ENCODE measurements at regions of chr3 and their contacts with region 1.

Region 1: DNA sequence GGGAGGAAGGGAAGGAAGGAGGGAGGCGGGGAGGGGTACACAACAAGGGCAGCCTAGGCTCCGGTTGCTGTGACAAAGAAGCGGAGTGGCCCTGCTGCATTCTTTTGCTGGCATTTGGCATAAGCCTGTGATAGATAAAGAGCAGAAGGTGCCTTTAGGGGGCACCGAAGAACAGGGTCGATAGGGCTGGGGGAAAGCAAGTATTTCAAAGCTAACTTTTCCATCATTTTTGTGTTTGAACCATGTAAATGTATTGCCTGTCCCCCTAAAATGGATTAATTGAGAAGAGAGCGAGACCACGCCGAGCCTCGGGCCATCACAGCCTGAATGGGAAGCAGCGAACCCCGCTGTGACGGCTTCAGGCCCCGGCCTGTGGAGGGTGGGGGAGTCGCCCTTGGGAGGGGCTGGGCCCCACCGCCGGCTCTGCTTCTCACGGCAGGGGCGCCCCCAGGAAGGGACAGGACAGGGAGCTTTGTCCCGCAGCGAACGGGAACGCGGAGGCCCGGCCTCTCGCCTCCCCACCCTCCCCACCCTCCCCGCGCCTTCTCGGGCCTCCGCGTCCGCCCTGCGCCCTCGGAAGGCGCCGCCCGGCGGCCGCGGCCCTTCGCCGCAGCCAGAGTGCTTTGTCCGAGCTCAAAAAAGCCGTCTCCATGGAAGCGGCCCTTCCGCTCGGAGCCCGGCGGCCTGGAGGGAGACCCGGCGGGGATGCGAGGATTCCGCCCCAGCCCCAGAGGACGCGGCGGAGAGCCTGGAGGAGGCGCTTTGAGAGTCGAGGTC is 32.4 kb upstream of the ALDH1L1 start:
- DNase-seq: peak; percentile 63 to 86
- ATAC-seq: peak; percentile 79
- H3K4me3 ChIP-seq: peak overlapping the region; percentile 1 to 8
- H3K27ac ChIP-seq: peak overlapping the region; percentile 53 to 64
- H3K4me1 ChIP-seq: peaks cover 0 to 2% of the 10 kb centered on the region in 2 donors
- H3K27me3 ChIP-seq: no peaks in the 10 kb centered on the region

Region 2: DNA sequence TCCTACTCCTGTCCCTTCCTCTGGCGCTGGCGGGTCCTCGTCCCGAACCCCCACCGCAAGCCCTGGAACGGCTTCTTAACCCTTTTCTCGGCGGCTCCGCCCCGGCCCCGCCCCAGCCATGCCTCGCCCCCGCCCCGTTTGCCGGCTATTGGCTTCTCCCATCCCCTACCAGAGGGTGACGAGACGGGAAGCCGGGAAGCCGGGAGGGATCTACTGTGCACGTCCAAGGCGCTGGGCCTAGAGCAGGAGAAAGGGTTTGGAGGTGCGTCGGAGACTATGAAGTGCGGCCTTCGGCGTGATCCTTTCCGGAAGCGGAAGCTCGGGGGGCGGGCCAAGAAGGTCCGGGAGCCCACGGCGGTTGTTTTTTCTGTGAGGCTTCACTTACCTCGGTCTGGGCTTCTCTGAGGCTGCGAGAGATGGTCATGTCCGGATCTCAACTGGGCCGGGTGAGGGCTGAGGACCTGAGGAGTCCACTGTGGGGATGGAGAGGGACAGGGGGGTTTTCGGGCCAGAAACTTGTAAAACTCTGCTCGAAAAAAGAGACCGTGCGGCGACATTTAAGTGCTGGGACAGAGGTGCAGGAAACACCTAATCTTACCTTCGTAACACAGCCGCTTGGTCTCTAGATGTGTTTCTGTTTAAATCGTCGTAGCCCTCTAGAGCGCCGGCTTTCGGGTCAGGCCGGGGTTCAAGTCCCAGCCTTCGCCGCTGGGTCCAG is 222.4 kb before region 1 on chr3:
- intact Hi-C with region 1: loop called in 1 of 2 experiments (anchors 10 kb)
- DNase-seq: peak; percentile 94 to 95
- ATAC-seq: peak; percentile 93
- H3K4me3 ChIP-seq: peak overlapping the region; percentile 1 to 92
- H3K27ac ChIP-seq: peak overlapping the region in 1 of 2 donors; percentile 89
- H3K4me1 ChIP-seq: no peaks in the 10 kb centered on the region
- H3K27me3 ChIP-seq: no peaks in the 10 kb centered on the region

Region 3: GRCh38 chr3:126100634-126101301 is 112.0 kb before region 1 on chr3:
- intact Hi-C with region 1: loop called in 1 of 2 experiments (anchors 5 kb)
- DNase-seq: peak in 1 of 2 donors; percentile 77
- ATAC-seq: peak; percentile 39
- H3K4me3 ChIP-seq: no peak overlapping the region
- H3K27ac ChIP-seq: peak overlapping the region; percentile 90 to 91
- H3K4me1 ChIP-seq: peaks cover 2 to 7% of the 10 kb centered on the region in 2 donors
- H3K27me3 ChIP-seq: no peaks in the 10 kb centered on the region

Region 4: GRCh38 chr3:126259411-126260391 is 46.9 kb after region 1 on chr3:
- intact Hi-C with region 1: loop called in 1 of 2 experiments (anchors 2 kb)
- DNase-seq: peak; percentile 76 to 87
- ATAC-seq: peak; percentile 85
- H3K4me3 ChIP-seq: no peak overlapping the region
- H3K27ac ChIP-seq: peak overlapping the region in 1 of 2 donors; percentile 59
- H3K4me1 ChIP-seq: no peaks in the 10 kb centered on the region
- H3K27me3 ChIP-seq: no peaks in the 10 kb centered on the region

Region 5: DNA sequence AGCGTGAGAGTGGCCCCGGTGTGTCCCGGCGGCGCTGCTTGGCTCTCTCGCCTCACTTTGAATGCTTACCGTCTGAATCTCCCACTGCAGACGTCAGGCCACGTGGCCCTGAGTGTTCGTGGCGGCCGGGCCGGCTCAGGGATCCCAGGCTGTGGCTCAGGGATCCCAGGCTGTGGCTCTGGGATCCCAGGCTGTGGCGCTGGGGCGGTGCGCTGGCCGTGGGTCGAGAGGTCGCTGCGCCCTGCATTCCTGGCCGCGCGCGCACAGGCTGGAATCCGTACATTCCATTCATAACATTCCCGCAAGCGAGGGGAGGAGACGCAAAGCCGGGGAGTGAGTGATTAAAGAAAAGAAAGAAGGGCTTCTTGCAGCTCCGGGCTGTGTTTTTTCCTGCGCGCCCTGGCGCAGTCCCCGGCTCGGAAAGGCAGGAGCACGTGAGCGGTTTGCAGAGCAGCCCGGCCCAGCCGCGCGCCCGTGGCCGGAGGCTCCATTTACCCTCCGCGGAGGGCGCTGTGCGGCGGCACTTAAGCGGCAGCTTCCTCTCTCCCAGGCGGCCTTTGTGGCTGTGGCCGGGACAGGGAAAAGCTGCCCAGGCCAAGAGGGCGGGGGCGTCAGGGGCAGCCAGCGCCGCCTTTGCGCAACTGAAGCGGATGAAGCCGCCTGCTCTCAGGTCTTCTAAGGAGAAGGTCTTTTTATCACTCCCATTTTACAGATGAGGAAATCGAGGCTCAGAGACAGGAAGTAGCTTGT is 54.6 kb after region 1 on chr3:
- intact Hi-C with region 1: loop called in 1 of 2 experiments (anchors 5 kb)
- DNase-seq: peak; percentile 86 to 94
- ATAC-seq: peak; percentile 83
- H3K4me3 ChIP-seq: no peak overlapping the region
- H3K27ac ChIP-seq: peak overlapping the region; percentile 87 to 97
- H3K4me1 ChIP-seq: no peaks in the 10 kb centered on the region
- H3K27me3 ChIP-seq: no peaks in the 10 kb centered on the region

Region 6: GRCh38 chr3:126357295-126358037 is 144.7 kb after region 1 on chr3 and contains the start of gene KLF15:
- intact Hi-C with region 1: loop called in 1 of 2 experiments (anchors 5 kb)
- DNase-seq: peak; percentile 90 to 95
- ATAC-seq: peak; percentile 90
- H3K4me3 ChIP-seq: peak within 1 kb of the TSS; percentile 90 to 98
- H3K27ac ChIP-seq: peak within 1 kb of the TSS; percentile 91 to 97
- H3K4me1 ChIP-seq: peaks cover 3% of the 10 kb centered on the region in 2 donors
- H3K27me3 ChIP-seq: no peaks in the 10 kb centered on the region
- total RNA-seq, gene KLF15: 8.5 to 39.9 TPM

Measured in aorta (tissue), 5 donors.